Right cardiac atrium (tissue), 5 donors: ENCODE measurements at regions of chr17 and their contacts with region 1.

Region 1: GRCh38 chr17:80866147-80866793 is 125.4 kb upstream of the CHMP6 start:
- DNase-seq: peak; percentile 58 to 86 (median 81)
- ATAC-seq: peak; percentile 72 to 76
- H3K4me3 ChIP-seq: no peak overlapping the region
- H3K27ac ChIP-seq: no peak overlapping the region
- H3K4me1 ChIP-seq: peaks cover 1% of the 10 kb centered on the region
- H3K27me3 ChIP-seq: no peaks in the 10 kb centered on the region

Region 2: GRCh38 chr17:80737106-80738019 is 128.9 kb before region 1 on chr17:
- intact Hi-C with region 1: no loop called
- DNase-seq: peak in 1 of 3 donors; percentile 69
- ATAC-seq: no peak
- H3K4me3 ChIP-seq: no peak overlapping the region
- H3K27ac ChIP-seq: no peak overlapping the region
- H3K4me1 ChIP-seq: no peaks in the 10 kb centered on the region
- H3K27me3 ChIP-seq: no peaks in the 10 kb centered on the region

Region 3: GRCh38 chr17:80970044-80970761 is 103.9 kb after region 1 on chr17:
- intact Hi-C with region 1: loop called in 3 of 4 experiments (anchors 5 to 10 kb)
- DNase-seq: peak; percentile 57 to 85 (median 85)
- ATAC-seq: peak; percentile 61 to 65
- H3K4me3 ChIP-seq: no peak overlapping the region
- H3K27ac ChIP-seq: no peak overlapping the region
- H3K4me1 ChIP-seq: peaks cover 7% of the 10 kb centered on the region
- H3K27me3 ChIP-seq: no peaks in the 10 kb centered on the region